Right ventricle myocardium inferior (tissue), 1 donor: ENCODE measurements at regions of chrX and their contacts with region 1.

Region 1: GRCh38 chrX:123173833-123174232 is 10.2 kb upstream of the GRIA3 start:
- DNase-seq: no peak
- ATAC-seq: no peak

Region 2: DNA sequence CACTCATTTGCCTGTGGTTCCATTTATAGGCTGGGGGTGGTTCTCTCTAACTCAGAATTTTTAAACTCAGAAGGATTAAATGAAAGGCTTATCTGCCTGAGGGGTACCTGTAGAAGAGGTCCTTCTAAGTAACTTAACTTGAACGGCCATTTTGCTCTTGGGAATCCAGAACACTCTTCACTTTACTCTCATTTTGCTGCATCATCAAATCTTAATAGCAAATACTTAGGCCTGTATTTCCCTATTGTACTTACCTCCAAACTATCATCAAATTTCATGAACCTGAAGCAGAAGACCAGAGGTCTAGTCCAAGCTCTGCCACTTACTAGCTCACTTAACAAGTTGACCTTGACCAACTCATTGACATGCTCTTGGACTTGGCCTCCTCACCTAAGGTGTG is 80.6 kb after region 1 on chrX:
- intact Hi-C with region 1: no loop called
- DNase-seq: no peak
- ATAC-seq: no peak

Region 3: GRCh38 chrX:123422877-123423276 is 249.0 kb after region 1 on chrX:
- intact Hi-C with region 1: loop called (anchors 5 kb)
- DNase-seq: peak; percentile 46
- ATAC-seq: no peak

Region 4: GRCh38 chrX:123580792-123581191 is 407.0 kb after region 1 on chrX:
- intact Hi-C with region 1: no loop called
- DNase-seq: no peak
- ATAC-seq: no peak